CD8-positive, alpha-beta T cell (primary cell): ENCODE measurements at regions of chr14 and their contacts with region 1.

Region 1: DNA sequence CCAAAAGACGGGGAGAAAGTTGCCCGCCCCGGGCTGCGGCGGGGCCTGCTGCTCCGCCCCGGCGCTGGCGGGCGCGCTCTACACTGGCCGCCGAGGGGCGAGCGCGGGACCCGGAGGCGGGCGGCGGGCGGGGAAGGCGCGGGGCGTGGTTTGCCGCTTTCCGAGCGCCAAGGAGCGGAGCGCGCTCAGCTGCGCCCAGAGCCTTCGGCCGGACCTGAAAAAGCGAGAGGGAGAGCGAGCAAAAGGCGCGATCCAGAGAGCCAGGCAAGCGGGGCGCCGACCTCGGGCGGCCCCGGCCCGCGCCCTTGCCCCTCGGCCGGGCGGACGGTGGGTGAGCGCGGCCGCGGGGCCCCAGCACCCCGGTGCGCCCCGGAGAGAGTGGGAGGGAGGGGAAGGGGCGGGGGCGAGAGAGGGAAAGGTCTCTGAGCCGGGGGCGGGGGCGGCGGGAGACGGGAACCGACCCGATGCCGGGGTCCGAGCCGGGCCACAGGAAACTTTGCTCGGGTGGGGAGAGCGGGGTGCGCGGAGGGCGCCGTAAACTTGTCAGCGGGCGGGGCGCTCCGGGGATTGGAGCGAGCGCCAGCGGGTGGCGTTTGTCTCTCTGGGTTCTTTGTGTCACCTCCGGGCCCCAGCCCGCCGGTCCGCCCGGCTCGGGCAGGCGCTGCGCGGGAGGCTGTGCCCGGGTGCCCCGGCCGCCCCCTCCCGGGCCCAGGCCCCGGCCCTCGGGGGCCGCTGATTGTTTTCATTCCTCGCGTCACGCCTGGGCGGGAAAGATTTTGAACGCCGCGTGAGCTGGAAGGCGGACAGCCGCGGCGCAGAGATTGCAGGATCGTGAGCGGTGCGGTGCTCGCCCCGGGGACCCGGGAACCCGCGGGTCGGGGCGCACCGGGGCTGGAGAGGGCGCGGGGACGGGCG is at the start of gene SYNE2:
- DNase-seq: peak; percentile 63 to 89 (median 83)
- ATAC-seq: peak; percentile 81
- H3K4me3 ChIP-seq: peak within 1 kb of the TSS; percentile 67 to 79
- H3K4me3 Mint-ChIP-seq: peak within 1 kb of the TSS; percentile 93
- H3K27ac ChIP-seq: peak within 1 kb of the TSS; percentile 69 to 72
- H3K27ac Mint-ChIP-seq: peak within 1 kb of the TSS; percentile 96
- H3K4me1 ChIP-seq: peaks cover 41% of the 10 kb centered on the region
- H3K4me1 Mint-ChIP-seq: peaks cover 44% of the 10 kb centered on the region
- H3K27me3 ChIP-seq: no peaks in the 10 kb centered on the region
- H3K27me3 Mint-ChIP-seq: no peaks in the 10 kb centered on the region
- CTCF ChIP-seq: peak; percentile 19
- total RNA-seq, gene SYNE2: 93.4 to 94.2 TPM

Region 2: DNA sequence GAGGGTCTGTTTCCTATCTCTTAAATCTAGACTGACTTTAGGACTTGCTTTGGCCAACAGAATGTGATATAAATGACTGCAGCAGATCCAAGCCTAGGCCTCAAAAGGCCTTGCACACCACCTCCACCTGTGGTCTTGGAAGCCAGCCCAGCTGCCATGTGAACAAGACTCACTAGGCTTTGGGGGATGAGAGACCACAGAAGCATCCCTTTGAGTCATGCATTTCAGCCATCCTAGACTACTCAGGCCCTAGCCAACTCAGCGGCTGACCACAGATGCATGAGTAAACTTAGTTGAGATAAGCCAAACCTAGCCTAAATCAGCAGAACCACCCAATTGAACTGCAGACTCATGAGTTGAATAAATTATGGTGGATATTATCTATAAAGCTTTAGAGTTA is 895.5 kb before region 1 on chr14:
- CTCF ChIA-PET with region 1: no interaction called
- POLR2A ChIA-PET with region 1: no interaction called
- intact Hi-C with region 1: no loop called
- DNase-seq: no peak
- ATAC-seq: no peak
- H3K4me3 ChIP-seq: no peak overlapping the region
- H3K4me3 Mint-ChIP-seq: no peak overlapping the region
- H3K27ac ChIP-seq: no peak overlapping the region
- H3K27ac Mint-ChIP-seq: no peak overlapping the region
- H3K4me1 ChIP-seq: no peaks in the 10 kb centered on the region
- H3K4me1 Mint-ChIP-seq: no peaks in the 10 kb centered on the region
- H3K27me3 ChIP-seq: no peaks in the 10 kb centered on the region
- H3K27me3 Mint-ChIP-seq: peaks cover 3% of the 10 kb centered on the region
- CTCF ChIP-seq: no peak

Region 3: DNA sequence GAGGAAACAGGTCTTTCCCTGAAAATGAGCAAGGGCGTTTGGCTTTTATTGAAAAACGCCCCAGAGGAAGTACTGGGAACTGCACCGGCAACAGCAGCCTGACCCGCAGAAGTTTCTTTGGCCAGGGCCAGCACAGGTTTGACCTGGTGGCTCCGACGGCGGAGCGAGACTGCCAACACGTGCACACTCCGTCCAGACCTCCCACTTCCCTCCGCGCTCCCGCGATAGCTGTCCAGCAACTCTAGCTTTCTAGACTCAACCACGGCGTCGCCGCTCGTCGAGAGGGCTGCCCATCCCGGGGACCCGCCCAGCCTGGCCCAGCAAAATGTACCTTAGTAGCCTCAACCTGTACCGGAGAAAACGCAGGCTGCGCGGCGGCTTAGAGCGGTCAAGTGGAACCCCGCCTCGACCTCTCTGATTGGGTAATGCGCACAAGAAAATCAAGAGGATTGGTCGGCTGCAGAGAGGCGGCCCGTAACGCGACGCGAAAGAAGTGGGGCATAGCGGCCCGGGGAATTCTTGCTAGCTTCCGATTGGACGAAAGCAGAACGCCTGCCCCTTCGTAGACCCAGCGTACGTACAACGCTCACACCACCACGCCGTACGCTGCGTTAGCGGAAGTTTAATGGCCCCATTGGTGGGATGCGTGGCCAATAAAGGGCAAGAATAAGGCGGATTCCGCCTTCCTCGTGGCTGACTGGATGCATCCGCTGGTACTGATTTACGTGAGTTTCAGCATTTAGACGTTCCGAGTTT is 211.4 kb before region 1 on chr14 and contains the start of gene WDR89:
- CTCF ChIA-PET with region 1: no interaction called
- POLR2A ChIA-PET with region 1: no interaction called
- intact Hi-C with region 1: loop called (anchors 5 kb)
- DNase-seq: peak; percentile 91 to 100 (median 94)
- ATAC-seq: peak; percentile 85
- H3K4me3 ChIP-seq: peak within 1 kb of the TSS; percentile 85 to 89
- H3K4me3 Mint-ChIP-seq: peak within 1 kb of the TSS; percentile 87
- H3K27ac ChIP-seq: peak within 1 kb of the TSS; percentile 94 to 99
- H3K27ac Mint-ChIP-seq: peak within 1 kb of the TSS; percentile 96
- H3K4me1 ChIP-seq: peaks cover 30% of the 10 kb centered on the region
- H3K4me1 Mint-ChIP-seq: peaks cover 57% of the 10 kb centered on the region
- H3K27me3 ChIP-seq: no peaks in the 10 kb centered on the region
- H3K27me3 Mint-ChIP-seq: no peaks in the 10 kb centered on the region
- CTCF ChIP-seq: peak; percentile 72
- total RNA-seq, gene WDR89: 13.6 to 13.7 TPM

Region 4: DNA sequence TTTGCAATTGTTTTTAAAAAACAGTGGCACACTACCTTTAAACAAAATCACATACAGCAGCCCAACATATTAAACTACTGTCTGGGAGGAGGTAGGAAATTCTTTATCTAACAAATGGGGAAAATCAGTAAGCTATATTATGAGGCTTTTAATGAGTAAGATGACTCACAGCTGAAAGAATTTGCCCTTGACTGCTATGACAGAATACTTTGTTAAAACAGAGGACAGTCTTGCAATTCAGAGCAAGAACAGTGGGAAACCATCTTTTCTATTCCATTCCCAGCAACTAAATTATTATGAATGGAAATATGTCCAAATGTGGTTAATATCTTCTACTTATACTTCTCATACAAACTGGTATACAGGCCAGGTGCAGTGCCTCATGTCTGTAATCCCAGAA is 76.0 kb before region 1 on chr14:
- CTCF ChIA-PET with region 1: no interaction called
- POLR2A ChIA-PET with region 1: no interaction called
- intact Hi-C with region 1: no loop called
- DNase-seq: no peak
- ATAC-seq: no peak
- H3K4me3 ChIP-seq: no peak overlapping the region
- H3K4me3 Mint-ChIP-seq: no peak overlapping the region
- H3K27ac ChIP-seq: no peak overlapping the region
- H3K27ac Mint-ChIP-seq: no peak overlapping the region
- H3K4me1 ChIP-seq: no peaks in the 10 kb centered on the region
- H3K4me1 Mint-ChIP-seq: no peaks in the 10 kb centered on the region
- H3K27me3 ChIP-seq: no peaks in the 10 kb centered on the region
- H3K27me3 Mint-ChIP-seq: no peaks in the 10 kb centered on the region
- CTCF ChIP-seq: no peak

Region 5: DNA sequence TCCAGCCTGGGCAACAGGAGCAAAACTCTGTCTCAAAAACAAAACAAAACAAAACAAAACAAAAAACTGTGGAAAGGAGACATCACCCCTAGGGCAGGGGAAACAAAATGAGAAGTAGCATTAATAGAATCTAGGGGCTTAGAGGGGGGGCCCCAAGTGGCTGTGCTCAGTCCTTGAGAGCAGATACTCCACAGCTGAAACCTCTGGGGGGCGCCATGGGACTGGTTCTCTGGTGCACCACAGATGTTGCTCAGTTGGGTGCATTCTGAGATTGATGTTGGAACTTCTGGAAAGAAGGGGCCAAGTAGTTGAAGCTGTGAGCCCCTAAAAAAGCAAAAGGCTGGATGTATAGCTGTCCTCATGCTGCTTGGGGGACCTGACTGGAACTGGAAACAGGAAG is 12.1 kb before region 1 on chr14:
- CTCF ChIA-PET with region 1: interaction called, 15 read pairs
- POLR2A ChIA-PET with region 1: no interaction called
- intact Hi-C with region 1: no loop called
- DNase-seq: peak; percentile 46 to 78 (median 75)
- ATAC-seq: peak; percentile 81
- H3K4me3 ChIP-seq: no peak overlapping the region
- H3K4me3 Mint-ChIP-seq: no peak overlapping the region
- H3K27ac ChIP-seq: no peak overlapping the region
- H3K27ac Mint-ChIP-seq: no peak overlapping the region
- H3K4me1 ChIP-seq: no peaks in the 10 kb centered on the region
- H3K4me1 Mint-ChIP-seq: peaks cover 5% of the 10 kb centered on the region
- H3K27me3 ChIP-seq: no peaks in the 10 kb centered on the region
- H3K27me3 Mint-ChIP-seq: no peaks in the 10 kb centered on the region
- CTCF ChIP-seq: peak; percentile 32

Region 6: DNA sequence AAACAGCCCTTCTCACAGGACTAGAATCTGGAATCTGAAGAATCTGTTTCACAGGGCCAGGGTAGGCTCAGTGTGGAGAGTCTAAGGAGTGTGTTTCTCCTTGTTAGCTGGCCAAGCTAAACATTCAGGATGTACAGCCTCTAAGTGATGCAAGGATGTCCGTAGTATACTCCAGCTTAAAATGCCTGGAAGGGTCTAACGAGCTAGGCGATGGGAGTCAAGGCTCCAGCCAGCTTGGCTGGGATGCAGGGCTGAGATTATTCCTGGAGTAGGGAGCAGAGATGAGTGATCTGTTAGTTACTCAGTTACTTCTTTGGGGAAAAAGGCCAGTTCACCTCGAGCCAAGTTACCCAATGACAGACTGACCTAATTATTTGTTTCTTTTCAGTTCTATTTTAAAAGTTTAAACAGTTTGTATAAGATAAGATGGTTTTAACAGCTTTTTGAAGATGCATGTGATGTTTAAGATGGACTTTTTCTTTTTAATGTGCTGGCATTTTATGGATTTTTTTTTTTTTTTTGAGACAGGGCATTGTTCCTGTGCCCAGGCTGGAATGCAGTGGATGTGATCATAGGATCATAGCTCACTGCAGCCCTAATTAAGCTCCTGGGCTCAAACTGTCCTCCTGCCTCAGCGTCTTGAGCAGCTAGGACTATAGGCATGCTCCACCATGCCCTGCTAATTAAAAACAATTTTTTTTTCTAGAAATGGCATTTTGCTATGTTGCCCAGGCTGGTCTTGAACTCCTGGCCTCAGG is 40.8 kb after region 1 on chr14:
- CTCF ChIA-PET with region 1: interaction called, 4 read pairs
- POLR2A ChIA-PET with region 1: no interaction called
- intact Hi-C with region 1: loop called (anchors 5 kb)
- DNase-seq: no peak
- ATAC-seq: no peak
- H3K4me3 ChIP-seq: no peak overlapping the region
- H3K4me3 Mint-ChIP-seq: no peak overlapping the region
- H3K27ac ChIP-seq: no peak overlapping the region
- H3K27ac Mint-ChIP-seq: no peak overlapping the region
- H3K4me1 ChIP-seq: no peaks in the 10 kb centered on the region
- H3K4me1 Mint-ChIP-seq: peaks cover 44% of the 10 kb centered on the region
- H3K27me3 ChIP-seq: no peaks in the 10 kb centered on the region
- H3K27me3 Mint-ChIP-seq: no peaks in the 10 kb centered on the region
- CTCF ChIP-seq: no peak

Region 7: GRCh38 chr14:63940387-63940786 is 87.3 kb after region 1 on chr14:
- CTCF ChIA-PET with region 1: interaction called, 10 read pairs
- POLR2A ChIA-PET with region 1: interaction called, 5 read pairs
- intact Hi-C with region 1: loop called in 1 of 2 experiments (anchors 2 kb)
- DNase-seq: peak in 3 of 9 experiments; percentile 8 to 64 (median 43)
- ATAC-seq: peak; percentile 72
- H3K4me3 ChIP-seq: no peak overlapping the region
- H3K4me3 Mint-ChIP-seq: peak overlapping the region; percentile 42
- H3K27ac ChIP-seq: peak overlapping the region; percentile 8 to 56
- H3K27ac Mint-ChIP-seq: peak overlapping the region; percentile 84
- H3K4me1 ChIP-seq: peaks cover 47% of the 10 kb centered on the region
- H3K4me1 Mint-ChIP-seq: peaks cover 26% of the 10 kb centered on the region
- H3K27me3 ChIP-seq: no peaks in the 10 kb centered on the region
- H3K27me3 Mint-ChIP-seq: no peaks in the 10 kb centered on the region
- CTCF ChIP-seq: no peak

Region 8: DNA sequence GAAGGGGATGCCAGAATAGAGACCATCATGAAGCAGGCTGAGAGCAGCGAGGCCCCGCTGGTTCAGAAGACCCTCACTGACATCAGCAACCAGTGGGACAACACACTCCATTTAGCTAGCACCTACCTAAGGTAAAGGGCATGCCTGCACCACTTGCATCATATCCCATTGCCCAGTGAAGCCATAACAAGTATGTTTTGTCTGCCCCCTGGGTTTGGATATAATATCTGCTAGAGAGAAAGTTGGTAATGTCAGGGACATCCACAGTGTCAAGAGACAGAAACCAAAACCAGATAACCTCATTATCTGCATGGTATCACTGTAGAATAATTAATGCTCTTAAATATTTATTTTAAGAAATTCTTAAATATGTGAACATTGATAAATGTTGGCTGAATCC is 173.5 kb after region 1 on chr14:
- CTCF ChIA-PET with region 1: no interaction called
- POLR2A ChIA-PET with region 1: no interaction called
- intact Hi-C with region 1: no loop called
- DNase-seq: peak in 1 of 9 experiments; percentile 18
- ATAC-seq: no peak
- H3K4me3 ChIP-seq: no peak overlapping the region
- H3K4me3 Mint-ChIP-seq: no peak overlapping the region
- H3K27ac ChIP-seq: no peak overlapping the region
- H3K27ac Mint-ChIP-seq: no peak overlapping the region
- H3K4me1 ChIP-seq: no peaks in the 10 kb centered on the region
- H3K4me1 Mint-ChIP-seq: no peaks in the 10 kb centered on the region
- H3K27me3 ChIP-seq: no peaks in the 10 kb centered on the region
- H3K27me3 Mint-ChIP-seq: no peaks in the 10 kb centered on the region
- CTCF ChIP-seq: no peak

Region 9: GRCh38 chr14:64387694-64388532 is 534.8 kb after region 1 on chr14 and contains the start of gene MTHFD1:
- CTCF ChIA-PET with region 1: no interaction called
- POLR2A ChIA-PET with region 1: interaction called, 6 read pairs
- intact Hi-C with region 1: loop called in 1 of 2 experiments (anchors 5 kb)
- DNase-seq: peak; percentile 88 to 98 (median 97)
- ATAC-seq: peak; percentile 84
- H3K4me3 ChIP-seq: peak within 1 kb of the TSS; percentile 79 to 80
- H3K4me3 Mint-ChIP-seq: peak within 1 kb of the TSS; percentile 99
- H3K27ac ChIP-seq: peak within 1 kb of the TSS; percentile 33 to 50
- H3K27ac Mint-ChIP-seq: peak within 1 kb of the TSS; percentile 95
- H3K4me1 ChIP-seq: peaks cover 20% of the 10 kb centered on the region
- H3K4me1 Mint-ChIP-seq: peaks cover 37% of the 10 kb centered on the region
- H3K27me3 ChIP-seq: no peaks in the 10 kb centered on the region
- H3K27me3 Mint-ChIP-seq: no peaks in the 10 kb centered on the region
- CTCF ChIP-seq: no peak
- total RNA-seq, gene MTHFD1: 14.4 to 15.6 TPM